GM12878 (cell line): ENCODE measurements at regions of chr3 and their contacts with region 1.

Region 1: GRCh38 chr3:46923559-46924350 is 46.2 kb downstream of the PTH1R start:
- DNase-seq: no peak
- ATAC-seq: no peak
- H3K4me3 ChIP-seq: no peak overlapping the region
- H3K27ac ChIP-seq: no peak overlapping the region
- H3K4me1 ChIP-seq: peaks cover 39% of the 10 kb centered on the region
- H3K27me3 ChIP-seq: no peaks in the 10 kb centered on the region
- CTCF ChIP-seq: peak; percentile 35 to 37 (median 37); a peak in 5 of 6 replicates
- EP300 ChIP-seq: no peak
- POLR2A ChIP-seq: no peak
- RAD21 ChIP-seq: peak; percentile 67

Region 2: GRCh38 chr3:46909535-46910442 is 14.0 kb before region 1 on chr3:
- CTCF ChIA-PET with region 1: interaction called, 15 read pairs
- POLR2A ChIA-PET with region 1: interaction called, 5 read pairs
- RAD21 ChIA-PET with region 1: interaction called, 5 read pairs
- SMC1A ChIA-PET with region 1: interaction called, 7 read pairs
- in situ Hi-C with region 1: no loop called
- intact Hi-C with region 1: no loop called
- DNase-seq: no peak
- ATAC-seq: peak; percentile 93
- H3K4me3 ChIP-seq: no peak overlapping the region
- H3K27ac ChIP-seq: no peak overlapping the region
- H3K4me1 ChIP-seq: peaks cover 5% of the 10 kb centered on the region
- H3K27me3 ChIP-seq: no peaks in the 10 kb centered on the region
- CTCF ChIP-seq: peak; percentile 88 to 93 (median 88)
- EP300 ChIP-seq: no peak
- POLR2A ChIP-seq: peak; percentile 46; the same call in 1 of the 2 replicates
- RAD21 ChIP-seq: peak; percentile 84

Region 3: GRCh38 chr3:46947981-46948791 is 24.4 kb after region 1 on chr3:
- CTCF ChIA-PET with region 1: interaction called, 27 read pairs
- POLR2A ChIA-PET with region 1: interaction called, 163 read pairs
- RAD21 ChIA-PET with region 1: interaction called, 27 read pairs
- SMC1A ChIA-PET with region 1: interaction called, 298 read pairs
- in situ Hi-C with region 1: no loop called
- intact Hi-C with region 1: loop called (anchors 2 kb)
- DNase-seq: no peak
- ATAC-seq: no peak
- H3K4me3 ChIP-seq: no peak overlapping the region
- H3K27ac ChIP-seq: peak overlapping the region; percentile 73
- H3K4me1 ChIP-seq: peaks cover 45% of the 10 kb centered on the region
- H3K27me3 ChIP-seq: no peaks in the 10 kb centered on the region
- CTCF ChIP-seq: no peak
- EP300 ChIP-seq: no peak
- POLR2A ChIP-seq: no peak
- RAD21 ChIP-seq: no peak

Region 4: GRCh38 chr3:46960081-46960701 is 36.4 kb after region 1 on chr3:
- CTCF ChIA-PET with region 1: interaction called, 11 read pairs
- POLR2A ChIA-PET with region 1: interaction called, 163 read pairs
- RAD21 ChIA-PET with region 1: interaction called, 38 read pairs
- SMC1A ChIA-PET with region 1: interaction called, 298 read pairs
- in situ Hi-C with region 1: no loop called
- intact Hi-C with region 1: no loop called
- DNase-seq: no peak
- ATAC-seq: peak; percentile 65
- H3K4me3 ChIP-seq: no peak overlapping the region
- H3K27ac ChIP-seq: peak overlapping the region; percentile 38
- H3K4me1 ChIP-seq: peaks cover 55% of the 10 kb centered on the region
- H3K27me3 ChIP-seq: no peaks in the 10 kb centered on the region
- CTCF ChIP-seq: no peak
- EP300 ChIP-seq: no peak
- POLR2A ChIP-seq: no peak
- RAD21 ChIP-seq: no peak

Region 5: GRCh38 chr3:46987743-46988401 is 64.1 kb after region 1 on chr3:
- CTCF ChIA-PET with region 1: interaction called, 5 read pairs
- POLR2A ChIA-PET with region 1: interaction called, 6 read pairs
- RAD21 ChIA-PET with region 1: interaction called, 8 read pairs
- SMC1A ChIA-PET with region 1: interaction called, 126 read pairs
- in situ Hi-C with region 1: no loop called
- intact Hi-C with region 1: no loop called
- DNase-seq: peak; percentile 63
- ATAC-seq: peak; percentile 85
- H3K4me3 ChIP-seq: peak overlapping the region; percentile 57
- H3K27ac ChIP-seq: peak overlapping the region; percentile 98
- H3K4me1 ChIP-seq: peaks cover 62% of the 10 kb centered on the region
- H3K27me3 ChIP-seq: no peaks in the 10 kb centered on the region
- CTCF ChIP-seq: no peak
- EP300 ChIP-seq: 0 out of 4 replicates have a peak, but pooled peaks of 1 of the 2 experiments have one; percentile 51
- POLR2A ChIP-seq: peak; percentile 68
- RAD21 ChIP-seq: no peak